ENCODE measurements at regions of chr2 and their contacts with region 1.

Region 1: GRCh38 chr2:65056215-65057053 is at the start of gene CEP68:
- DNase-seq: peak; percentile 98
- ATAC-seq: peak; percentile 92
- H3K4me3 ChIP-seq: peak within 1 kb of the TSS; percentile 76 to 81 (median 80)
- H3K4me3 Mint-ChIP-seq: peak within 1 kb of the TSS; percentile 100
- H3K27ac ChIP-seq: peak within 1 kb of the TSS; percentile 78 to 88
- H3K27ac Mint-ChIP-seq: peak within 1 kb of the TSS; percentile 99
- H3K4me1 ChIP-seq: peaks cover 47 to 48% of the 10 kb centered on the region in 2 donors
- H3K4me1 Mint-ChIP-seq: peaks cover 65% of the 10 kb centered on the region
- H3K27me3 ChIP-seq: no peaks in the 10 kb centered on the region
- H3K27me3 Mint-ChIP-seq: no peaks in the 10 kb centered on the region
- CTCF ChIP-seq: no peak
- total RNA-seq, gene CEP68: 31.8 and 32.0 TPM in 2 replicates

Region 2: GRCh38 chr2:64144057-64145013 is 912.1 kb before region 1 on chr2 and contains the start of gene PELI1:
- CTCF ChIA-PET with region 1: no interaction called
- POLR2A ChIA-PET with region 1: no interaction called
- intact Hi-C with region 1: loop called (anchors 10 kb)
- DNase-seq: peak; percentile 95
- ATAC-seq: peak; percentile 95
- H3K4me3 ChIP-seq: peak within 1 kb of the TSS; percentile 77 to 98 (median 85)
- H3K4me3 Mint-ChIP-seq: peak within 1 kb of the TSS; percentile 92
- H3K27ac ChIP-seq: peak within 1 kb of the TSS; percentile 81 to 86
- H3K27ac Mint-ChIP-seq: peak within 1 kb of the TSS; percentile 94
- H3K4me1 ChIP-seq: peaks cover 22 to 32% of the 10 kb centered on the region in 2 donors
- H3K4me1 Mint-ChIP-seq: peaks cover 38% of the 10 kb centered on the region
- H3K27me3 ChIP-seq: no peaks in the 10 kb centered on the region
- H3K27me3 Mint-ChIP-seq: no peaks in the 10 kb centered on the region
- CTCF ChIP-seq: peak; percentile 10
- total RNA-seq, gene PELI1: 115 and 117 TPM in 2 replicates

Region 3: GRCh38 chr2:64988420-64989125 is 67.9 kb before region 1 on chr2:
- CTCF ChIA-PET with region 1: interaction called, 4 read pairs
- POLR2A ChIA-PET with region 1: no interaction called
- intact Hi-C with region 1: loop called (anchors 2 kb)
- DNase-seq: peak; percentile 75
- ATAC-seq: peak; percentile 33
- H3K4me3 ChIP-seq: peak overlapping the region; percentile 53 to 87 (median 81)
- H3K4me3 Mint-ChIP-seq: peak overlapping the region; percentile 92
- H3K27ac ChIP-seq: peak overlapping the region in 1 of 2 donors; percentile 53
- H3K27ac Mint-ChIP-seq: peak overlapping the region; percentile 84
- H3K4me1 ChIP-seq: peaks cover 17 to 24% of the 10 kb centered on the region in 2 donors
- H3K4me1 Mint-ChIP-seq: peaks cover 37% of the 10 kb centered on the region
- H3K27me3 ChIP-seq: no peaks in the 10 kb centered on the region
- H3K27me3 Mint-ChIP-seq: no peaks in the 10 kb centered on the region
- CTCF ChIP-seq: peak; percentile 48

Region 4: GRCh38 chr2:65031341-65032018 is 25.0 kb before region 1 on chr2:
- CTCF ChIA-PET with region 1: interaction called, 17 read pairs
- POLR2A ChIA-PET with region 1: interaction called, 14 read pairs
- intact Hi-C with region 1: loop called (anchors 2 kb)
- DNase-seq: peak; percentile 68
- ATAC-seq: peak; percentile 12
- H3K4me3 ChIP-seq: peak overlapping the region; percentile 9 to 63 (median 44)
- H3K4me3 Mint-ChIP-seq: peak overlapping the region; percentile 89
- H3K27ac ChIP-seq: peak overlapping the region; percentile 67 to 87
- H3K27ac Mint-ChIP-seq: peak overlapping the region; percentile 87
- H3K4me1 ChIP-seq: peaks cover 60 to 71% of the 10 kb centered on the region in 2 donors
- H3K4me1 Mint-ChIP-seq: peaks cover 65% of the 10 kb centered on the region
- H3K27me3 ChIP-seq: no peaks in the 10 kb centered on the region
- H3K27me3 Mint-ChIP-seq: no peaks in the 10 kb centered on the region
- CTCF ChIP-seq: no peak

Region 5: GRCh38 chr2:65075605-65076344 is 19.3 kb after region 1 on chr2:
- CTCF ChIA-PET with region 1: no interaction called
- POLR2A ChIA-PET with region 1: no interaction called
- intact Hi-C with region 1: no loop called
- DNase-seq: no peak
- ATAC-seq: no peak
- H3K4me3 ChIP-seq: no peak overlapping the region
- H3K4me3 Mint-ChIP-seq: no peak overlapping the region
- H3K27ac ChIP-seq: no peak overlapping the region
- H3K27ac Mint-ChIP-seq: no peak overlapping the region
- H3K4me1 ChIP-seq: peaks cover 7 to 18% of the 10 kb centered on the region in 2 donors
- H3K4me1 Mint-ChIP-seq: peaks cover 29% of the 10 kb centered on the region
- H3K27me3 ChIP-seq: no peaks in the 10 kb centered on the region
- H3K27me3 Mint-ChIP-seq: no peaks in the 10 kb centered on the region
- CTCF ChIP-seq: no peak

Region 6: DNA sequence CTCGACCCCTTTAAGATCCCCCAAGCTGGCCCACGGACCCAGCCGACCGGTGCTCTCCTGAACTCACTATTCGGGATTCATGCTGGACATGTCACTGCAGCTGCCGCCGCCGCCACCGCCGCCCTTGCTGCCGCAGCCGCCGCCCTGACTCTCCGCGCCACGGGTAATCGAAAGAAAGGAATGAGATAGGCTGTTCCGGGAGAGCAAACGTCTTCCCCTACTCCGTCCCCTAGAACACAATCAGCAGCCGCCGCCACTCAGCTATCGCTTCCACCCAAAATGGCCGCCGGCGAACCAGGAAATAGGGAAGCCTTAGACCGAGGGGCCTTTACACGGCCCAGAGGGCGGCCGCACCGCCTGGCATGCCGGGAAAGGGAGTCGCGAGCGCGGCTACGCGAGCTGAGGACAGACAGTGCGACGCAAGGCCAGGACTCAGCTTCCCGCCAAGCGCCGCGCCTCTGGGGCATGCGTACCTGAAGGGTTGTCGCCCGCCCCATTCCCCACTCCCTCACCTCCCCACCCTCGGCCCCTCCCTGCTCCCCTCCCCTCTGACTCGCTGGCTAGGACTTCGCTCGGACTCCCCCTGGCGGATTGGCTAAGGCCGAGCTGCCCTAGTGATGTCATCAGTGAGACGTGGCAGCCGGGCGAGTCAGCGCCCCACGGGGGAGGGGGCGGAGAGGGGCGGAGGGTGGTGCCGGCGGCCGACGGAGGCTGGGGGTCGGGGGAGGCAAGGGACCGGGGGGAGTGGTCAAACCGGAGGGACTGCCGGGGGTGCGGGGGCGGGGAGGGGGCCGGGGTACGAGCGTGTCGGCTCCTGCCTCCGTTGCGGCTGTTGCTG is 73.6 kb after region 1 on chr2 and contains the start of gene RAB1A:
- CTCF ChIA-PET with region 1: interaction called, 11 read pairs
- POLR2A ChIA-PET with region 1: interaction called, 20 read pairs
- intact Hi-C with region 1: loop called (anchors 1 kb)
- DNase-seq: peak; percentile 99
- ATAC-seq: peak; percentile 88
- H3K4me3 ChIP-seq: peak within 1 kb of the TSS; percentile 96 to 97 (median 97)
- H3K4me3 Mint-ChIP-seq: peak within 1 kb of the TSS; percentile 100
- H3K27ac ChIP-seq: peak within 1 kb of the TSS; percentile 94 to 98
- H3K27ac Mint-ChIP-seq: peak within 1 kb of the TSS; percentile 100
- H3K4me1 ChIP-seq: peaks cover 23 to 25% of the 10 kb centered on the region in 2 donors
- H3K4me1 Mint-ChIP-seq: peaks cover 38% of the 10 kb centered on the region
- H3K27me3 ChIP-seq: no peaks in the 10 kb centered on the region
- H3K27me3 Mint-ChIP-seq: no peaks in the 10 kb centered on the region
- CTCF ChIP-seq: no peak
- total RNA-seq, gene RAB1A: 42.2 and 43.7 TPM in 2 replicates

Region 7: GRCh38 chr2:65227425-65228262 is 171.2 kb after region 1 on chr2 and contains the start of gene ACTR2:
- CTCF ChIA-PET with region 1: interaction called, 3 read pairs
- POLR2A ChIA-PET with region 1: interaction called, 15 read pairs
- intact Hi-C with region 1: loop called (anchors 2 kb)
- DNase-seq: peak; percentile 97
- ATAC-seq: peak; percentile 90
- H3K4me3 ChIP-seq: peak within 1 kb of the TSS; percentile 86 to 100 (median 98)
- H3K4me3 Mint-ChIP-seq: peak within 1 kb of the TSS; percentile 93
- H3K27ac ChIP-seq: peak within 1 kb of the TSS; percentile 97
- H3K27ac Mint-ChIP-seq: peak within 1 kb of the TSS; percentile 100
- H3K4me1 ChIP-seq: peaks cover 39 to 44% of the 10 kb centered on the region in 2 donors
- H3K4me1 Mint-ChIP-seq: peaks cover 37% of the 10 kb centered on the region
- H3K27me3 ChIP-seq: no peaks in the 10 kb centered on the region
- H3K27me3 Mint-ChIP-seq: no peaks in the 10 kb centered on the region
- CTCF ChIP-seq: no peak
- total RNA-seq, gene ACTR2: 270 and 284 TPM in 2 replicates

Measured in B cell (primary cell).